Ascending aorta (tissue), 2 donors: ENCODE measurements at regions of chr18 and their contacts with region 1.

Region 1: DNA sequence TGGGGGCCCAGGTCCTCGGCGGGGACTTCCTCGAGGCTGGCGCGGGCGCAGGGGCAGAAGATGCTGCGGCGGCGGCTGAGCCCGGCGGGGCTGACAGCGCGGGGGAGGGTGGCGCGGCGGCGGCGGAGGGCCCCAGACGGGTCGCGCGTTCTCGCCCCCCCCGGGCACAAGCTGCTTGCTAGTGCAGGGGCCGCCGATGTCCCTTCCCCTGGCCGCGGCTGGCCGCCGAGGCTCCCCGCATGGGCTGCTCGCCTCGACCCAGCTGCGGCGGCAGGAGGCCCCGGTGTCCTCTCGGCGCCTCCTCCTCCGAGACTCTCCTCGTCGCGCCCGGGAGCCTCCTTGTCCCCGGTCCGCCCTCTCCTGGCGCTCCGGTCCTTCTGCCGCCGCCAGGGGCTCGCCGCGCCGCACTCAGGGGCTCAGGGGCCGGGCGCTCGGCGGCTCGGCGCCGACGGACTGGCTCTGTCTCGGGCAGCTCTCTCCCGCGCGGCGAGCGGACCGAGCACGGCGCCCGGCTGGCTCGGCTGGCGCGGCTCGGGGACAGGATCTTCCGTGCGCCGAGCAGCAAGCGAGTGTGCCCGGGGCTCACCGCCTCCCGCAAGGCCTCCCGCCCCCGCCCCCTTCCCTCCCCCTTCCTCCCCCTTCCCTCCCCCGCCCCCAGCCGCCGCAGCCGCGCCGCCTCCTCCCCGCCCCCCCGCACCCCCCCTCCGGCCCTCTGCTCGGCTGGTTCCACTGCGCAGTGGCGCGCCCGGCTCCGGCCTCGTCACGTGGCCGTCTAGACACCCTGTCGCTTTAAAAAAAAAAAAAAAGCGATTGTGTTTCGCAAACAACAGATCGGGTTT is 902 bp upstream of the SMAD7 start:
- DNase-seq: peak in 1 of 2 donors; percentile 93
- H3K4me3 ChIP-seq: peak overlapping the region; percentile 88 to 94
- H3K27ac ChIP-seq: peak overlapping the region; percentile 97 to 99
- H3K4me1 ChIP-seq: peaks cover 15 to 37% of the 10 kb centered on the region in 2 donors
- H3K27me3 ChIP-seq: no peaks in the 10 kb centered on the region
- CTCF ChIP-seq: peak; percentile 13 to 55 (median 21)

Region 2: DNA sequence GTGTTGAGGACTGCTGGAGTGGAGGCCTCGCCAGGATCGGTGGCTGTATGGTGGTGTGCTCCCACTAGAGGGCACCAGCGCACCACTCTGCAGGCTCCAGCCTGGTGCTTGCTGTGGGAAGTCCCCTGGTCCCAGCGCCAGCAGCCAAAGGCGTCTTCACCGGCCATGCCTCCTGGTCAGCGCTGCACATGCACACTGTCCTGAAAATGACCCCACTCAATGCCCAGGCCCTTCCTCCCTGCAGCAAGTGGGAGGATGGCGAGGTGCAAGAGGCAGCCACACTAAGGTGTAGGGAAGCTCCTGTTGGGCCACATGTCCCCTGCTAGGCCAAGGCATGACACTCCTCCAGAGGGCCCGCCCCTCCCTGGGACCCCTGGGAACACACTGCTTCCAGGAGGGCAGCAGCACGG is 276.3 kb before region 1 on chr18:
- intact Hi-C with region 1: loop called (anchors 2 kb)
- DNase-seq: peak; percentile 47 to 91
- H3K4me3 ChIP-seq: no peak overlapping the region
- H3K27ac ChIP-seq: peak overlapping the region in 1 of 2 donors; percentile 84
- H3K4me1 ChIP-seq: peaks cover 18 to 33% of the 10 kb centered on the region in 2 donors
- H3K27me3 ChIP-seq: no peaks in the 10 kb centered on the region
- CTCF ChIP-seq: peak; percentile 92 to 95 (median 94)

Region 3: GRCh38 chr18:48687346-48688042 is 264.2 kb before region 1 on chr18:
- intact Hi-C with region 1: no loop called
- DNase-seq: no peak
- H3K4me3 ChIP-seq: no peak overlapping the region
- H3K27ac ChIP-seq: no peak overlapping the region
- H3K4me1 ChIP-seq: no peaks in the 10 kb centered on the region
- H3K27me3 ChIP-seq: no peaks in the 10 kb centered on the region
- CTCF ChIP-seq: no peak

Region 4: GRCh38 chr18:48889115-48889941 is 62.3 kb before region 1 on chr18:
- intact Hi-C with region 1: no loop called
- DNase-seq: peak in 1 of 2 donors; percentile 80
- H3K4me3 ChIP-seq: no peak overlapping the region
- H3K27ac ChIP-seq: peak overlapping the region in 1 of 2 donors; percentile 27
- H3K4me1 ChIP-seq: peaks cover 3 to 25% of the 10 kb centered on the region in 2 donors
- H3K27me3 ChIP-seq: no peaks in the 10 kb centered on the region
- CTCF ChIP-seq: no peak

Region 5: DNA sequence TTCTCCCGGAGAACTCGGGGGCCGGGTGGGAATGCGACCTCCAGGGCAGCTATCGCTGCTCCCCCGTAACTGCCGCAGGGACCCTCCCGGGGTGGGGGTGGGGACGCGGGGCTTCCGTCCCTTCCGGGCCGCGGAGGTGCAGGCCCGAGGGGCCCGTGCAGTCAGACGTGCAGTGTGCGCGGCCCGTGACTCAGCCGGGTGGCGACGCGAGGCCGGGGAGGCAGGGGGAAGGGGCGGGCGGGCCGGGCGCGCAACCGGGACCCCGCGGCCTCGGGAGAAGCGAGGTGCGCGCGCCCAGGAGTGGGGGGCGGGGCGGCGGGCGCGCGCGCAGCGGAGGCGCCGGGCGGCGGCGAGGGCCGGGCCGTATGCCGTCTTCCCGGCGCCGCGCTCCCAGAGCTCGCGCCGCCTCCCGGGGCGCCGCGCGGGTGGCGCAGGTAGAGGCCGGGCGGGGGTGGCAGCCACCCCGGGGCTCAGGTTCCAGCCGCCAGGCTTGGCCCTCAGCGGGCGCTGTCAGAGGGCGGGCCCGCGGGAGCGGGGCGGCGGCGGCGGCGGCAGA is 24.1 kb after region 1 on chr18:
- intact Hi-C with region 1: loop called (anchors 1 kb)
- DNase-seq: peak in 1 of 2 donors; percentile 83
- H3K4me3 ChIP-seq: peak overlapping the region; percentile 93 to 94
- H3K27ac ChIP-seq: peak overlapping the region; percentile 84 to 89
- H3K4me1 ChIP-seq: peaks cover 4 to 6% of the 10 kb centered on the region in 2 donors
- H3K27me3 ChIP-seq: no peaks in the 10 kb centered on the region
- CTCF ChIP-seq: peak in 1 of 3 experiments; percentile 22

Region 6: DNA sequence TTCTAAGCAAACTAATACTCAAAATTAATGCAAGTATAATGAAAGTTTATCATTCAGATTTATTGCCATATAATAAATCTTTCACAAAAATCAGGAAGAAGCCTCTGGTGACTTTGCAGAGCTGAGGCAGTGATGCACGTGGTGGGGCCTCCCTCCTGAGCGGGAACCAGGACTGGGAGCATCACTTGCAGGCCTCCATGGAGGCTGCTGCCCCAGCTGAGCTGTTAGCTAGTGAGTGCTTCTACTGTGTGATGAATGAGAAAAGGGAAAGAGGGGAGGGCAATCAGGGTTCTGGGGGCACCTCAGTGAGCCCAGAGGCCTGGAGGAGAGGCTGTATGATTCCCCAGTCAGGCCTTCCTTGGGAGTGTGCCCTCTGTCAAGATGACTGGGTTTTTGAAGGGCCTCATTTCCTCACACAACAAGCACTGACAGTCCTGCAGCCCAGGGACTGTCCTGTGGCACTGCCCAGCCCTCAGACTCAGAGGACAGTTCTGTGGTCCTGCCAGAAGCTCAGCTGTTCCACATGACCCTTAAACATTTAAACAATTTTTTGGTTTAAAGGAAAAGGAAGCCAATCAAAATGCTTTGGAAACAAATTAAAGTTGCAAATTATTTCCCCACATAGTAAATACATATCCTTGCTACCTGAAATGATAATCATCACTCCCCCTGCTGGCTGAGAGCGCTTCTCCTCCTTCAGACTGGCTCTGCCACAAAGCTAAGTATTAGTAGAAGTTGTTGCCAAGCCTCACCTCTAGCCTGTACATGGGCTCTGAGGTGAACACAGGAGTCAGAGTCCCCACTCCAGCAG is 90.0 kb after region 1 on chr18:
- intact Hi-C with region 1: loop called (anchors 5 kb)
- DNase-seq: peak in 1 of 2 donors; percentile 82
- H3K4me3 ChIP-seq: no peak overlapping the region
- H3K27ac ChIP-seq: peak overlapping the region; percentile 13 to 63
- H3K4me1 ChIP-seq: no peaks in the 10 kb centered on the region
- H3K27me3 ChIP-seq: no peaks in the 10 kb centered on the region
- CTCF ChIP-seq: peak; percentile 38 to 70 (median 61)

Region 7: GRCh38 chr18:49813319-49814146 is 861.9 kb after region 1 on chr18 and contains the start of gene ACAA2:
- intact Hi-C with region 1: loop called (anchors 10 kb)
- DNase-seq: peak; percentile 51 to 92
- H3K4me3 ChIP-seq: peak within 1 kb of the TSS; percentile 79
- H3K27ac ChIP-seq: peak within 1 kb of the TSS; percentile 94 to 98
- H3K4me1 ChIP-seq: peaks cover 7 to 10% of the 10 kb centered on the region in 2 donors
- H3K27me3 ChIP-seq: no peaks in the 10 kb centered on the region
- CTCF ChIP-seq: no peak
- total RNA-seq, gene ACAA2: 33.4 TPM